Dorsolateral prefrontal cortex (tissue), 120 donors: ENCODE measurements at regions of chr18 and their contacts with region 1.

Region 1: GRCh38 chr18:830315-830901 is 18.4 kb upstream of the YES1 start:
- DNase-seq: no peak
- H3K4me3 ChIP-seq: peak overlapping the region in 1 of 59 donors; percentile 3
- H3K27ac ChIP-seq: peak overlapping the region in 8 of 59 donors; percentile 6 to 40 (median 16)
- H3K27me3 ChIP-seq: peaks cover 0 to 12% (median 0%) of the 10 kb centered on the region in 45 donors
- CTCF ChIP-seq: no peak

Region 2: DNA sequence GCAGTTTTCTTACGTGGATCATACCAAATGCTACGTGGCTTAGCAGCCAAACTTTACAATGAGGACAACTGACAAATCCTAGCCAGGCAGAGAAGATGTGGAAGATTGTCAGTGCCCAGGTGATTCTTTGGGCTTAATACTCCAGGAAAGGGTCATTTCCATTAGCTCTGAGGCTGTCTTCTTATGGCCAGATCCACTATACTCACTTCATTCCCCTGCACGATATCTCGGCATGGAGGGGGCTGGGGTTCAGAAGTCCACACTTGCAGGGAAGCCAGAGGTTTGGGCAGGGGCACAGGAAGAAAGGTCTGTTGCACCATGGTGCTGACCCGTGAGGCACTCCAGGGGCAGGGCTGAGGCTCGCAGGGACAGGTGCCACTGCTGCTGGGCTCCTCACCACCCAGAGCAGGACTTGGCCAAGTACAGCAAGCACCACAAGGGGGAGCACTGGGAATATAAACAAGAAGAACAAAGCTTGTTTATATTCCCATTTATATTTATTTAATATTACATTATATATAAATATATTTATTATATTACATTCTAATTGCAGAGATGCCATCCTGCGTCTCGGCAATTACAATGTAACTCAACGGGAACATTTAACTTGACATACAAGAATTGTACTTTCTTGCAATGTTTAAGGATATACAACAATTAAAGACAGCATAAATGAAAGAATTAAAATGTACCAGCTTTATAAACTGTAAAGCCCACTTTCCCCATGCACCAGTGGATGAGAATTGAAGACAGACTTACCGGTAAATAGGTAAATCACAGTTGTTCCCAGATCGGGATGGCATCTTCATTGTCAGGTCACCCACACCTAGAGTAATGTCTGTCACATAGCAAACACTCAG is 206.4 kb before region 1 on chr18:
- intact Hi-C with region 1: loop called (anchors 2 to 5 kb)
- DNase-seq: peak; percentile 13 to 84 (median 72)
- H3K4me3 ChIP-seq: peak overlapping the region in 4 of 59 donors; percentile 10 to 15 (median 14)
- H3K27ac ChIP-seq: peak overlapping the region in 40 of 59 donors; percentile 4 to 78 (median 54)
- H3K27me3 ChIP-seq: peaks cover 0 to 4% (median 0%) of the 10 kb centered on the region in 45 donors
- CTCF ChIP-seq: peak; percentile 58 to 95 (median 84)

Region 3: GRCh38 chr18:741931-742512 is 88.4 kb before region 1 on chr18:
- intact Hi-C with region 1: loop called in 1 of 2 experiments (anchors 2 kb)
- DNase-seq: no peak
- H3K4me3 ChIP-seq: no peak overlapping the region
- H3K27ac ChIP-seq: no peak overlapping the region
- H3K27me3 ChIP-seq: peaks cover 0 to 4% (median 0%) of the 10 kb centered on the region in 45 donors
- CTCF ChIP-seq: peak; percentile 70 to 96 (median 82)